WTC11 (cell line): ENCODE measurements at regions of chr17 and their contacts with region 1.

Region 1: DNA sequence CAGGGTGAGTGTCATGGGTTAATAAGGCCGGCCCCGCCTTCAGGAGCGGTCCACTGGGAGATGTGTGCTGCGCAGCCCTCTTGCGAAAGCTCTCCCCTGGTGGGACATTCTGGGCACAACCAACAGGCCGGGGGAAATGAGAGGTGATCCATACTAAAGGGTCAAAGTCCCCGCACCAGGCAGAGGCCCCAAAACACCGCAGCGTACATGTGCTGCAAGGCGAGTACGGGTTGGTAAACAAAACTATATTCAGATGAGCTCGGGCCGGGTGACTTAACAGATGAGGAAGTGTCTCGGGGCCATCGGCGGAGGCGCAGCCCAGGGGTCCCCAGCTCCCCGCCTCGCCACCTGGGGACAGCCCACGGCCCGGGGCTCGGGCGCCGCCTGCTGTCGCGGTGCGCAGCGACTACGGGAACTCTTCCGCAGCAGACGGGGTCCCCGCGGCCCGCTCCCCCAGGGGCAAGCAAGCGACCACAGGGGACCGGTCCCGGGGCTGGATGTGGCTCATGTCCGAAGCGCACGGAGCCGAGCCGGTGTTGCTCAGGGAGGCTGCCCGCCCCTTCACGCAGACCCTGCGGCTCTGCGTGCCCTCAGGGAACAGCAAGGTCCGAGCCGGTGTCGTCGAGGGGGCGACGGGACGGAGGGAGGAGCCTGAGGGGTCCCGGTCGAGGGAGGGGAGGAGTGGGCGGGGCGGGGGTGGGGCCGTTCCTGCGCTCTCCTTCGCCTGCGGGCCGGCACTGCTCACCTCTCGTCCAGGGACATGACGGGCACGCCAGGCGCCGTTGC is at the start of gene RAB37:
- DNase-seq: peak; percentile 70
- ATAC-seq: peak; percentile 58
- H3K4me3 Mint-ChIP-seq: peak within 1 kb of the TSS; percentile 81
- H3K27ac Mint-ChIP-seq: peak within 1 kb of the TSS; percentile 22; the same call in 1 of the 2 replicates
- H3K4me1 Mint-ChIP-seq: peaks cover 27% of the 10 kb centered on the region
- H3K27me3 Mint-ChIP-seq: peaks cover 18% of the 10 kb centered on the region
- CTCF ChIP-seq: no peak
- total RNA-seq, gene RAB37: 8.8 to 9.4 TPM (median 8.9 TPM) in 3 replicates

Region 2: DNA sequence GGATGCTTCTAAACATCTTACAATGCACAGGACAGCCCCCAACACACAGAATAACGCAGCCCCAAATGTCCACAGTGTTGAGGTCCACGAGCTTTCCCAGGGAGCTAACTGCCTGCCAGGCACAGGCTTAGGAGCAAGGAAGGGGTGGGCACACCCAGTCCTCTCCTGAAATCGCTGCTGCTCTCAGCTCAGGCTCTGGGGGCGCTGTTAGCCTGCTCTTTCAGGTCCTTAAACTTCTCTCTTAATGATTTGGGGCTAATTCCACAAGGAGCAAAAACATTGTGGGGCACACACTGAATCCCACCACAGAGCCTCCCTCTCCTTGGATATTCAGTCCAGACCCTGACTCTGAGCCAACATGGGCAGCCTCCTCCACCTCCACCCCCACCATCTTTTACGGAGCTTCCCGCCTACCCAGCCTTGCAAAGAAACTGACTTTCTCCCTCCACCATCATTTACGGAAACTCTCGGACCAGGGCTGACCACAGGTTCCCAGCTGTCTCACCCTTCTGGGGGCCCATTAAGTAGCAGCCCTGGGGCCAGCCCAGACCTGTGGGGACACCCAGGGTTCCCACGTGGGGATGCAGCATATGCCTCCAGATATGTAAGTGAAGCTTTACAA is 170.5 kb before region 1 on chr17:
- CTCF ChIA-PET with region 1: interaction called, 37 read pairs
- POLR2A ChIA-PET with region 1: no interaction called
- DNase-seq: peak; percentile 82
- ATAC-seq: peak; percentile 96
- H3K4me3 Mint-ChIP-seq: no peak overlapping the region
- H3K27ac Mint-ChIP-seq: no peak overlapping the region
- H3K4me1 Mint-ChIP-seq: peaks cover 7% of the 10 kb centered on the region; the same call in 1 of the 2 replicates
- H3K27me3 Mint-ChIP-seq: peaks cover 18% of the 10 kb centered on the region
- CTCF ChIP-seq: peak; percentile 77

Region 3: DNA sequence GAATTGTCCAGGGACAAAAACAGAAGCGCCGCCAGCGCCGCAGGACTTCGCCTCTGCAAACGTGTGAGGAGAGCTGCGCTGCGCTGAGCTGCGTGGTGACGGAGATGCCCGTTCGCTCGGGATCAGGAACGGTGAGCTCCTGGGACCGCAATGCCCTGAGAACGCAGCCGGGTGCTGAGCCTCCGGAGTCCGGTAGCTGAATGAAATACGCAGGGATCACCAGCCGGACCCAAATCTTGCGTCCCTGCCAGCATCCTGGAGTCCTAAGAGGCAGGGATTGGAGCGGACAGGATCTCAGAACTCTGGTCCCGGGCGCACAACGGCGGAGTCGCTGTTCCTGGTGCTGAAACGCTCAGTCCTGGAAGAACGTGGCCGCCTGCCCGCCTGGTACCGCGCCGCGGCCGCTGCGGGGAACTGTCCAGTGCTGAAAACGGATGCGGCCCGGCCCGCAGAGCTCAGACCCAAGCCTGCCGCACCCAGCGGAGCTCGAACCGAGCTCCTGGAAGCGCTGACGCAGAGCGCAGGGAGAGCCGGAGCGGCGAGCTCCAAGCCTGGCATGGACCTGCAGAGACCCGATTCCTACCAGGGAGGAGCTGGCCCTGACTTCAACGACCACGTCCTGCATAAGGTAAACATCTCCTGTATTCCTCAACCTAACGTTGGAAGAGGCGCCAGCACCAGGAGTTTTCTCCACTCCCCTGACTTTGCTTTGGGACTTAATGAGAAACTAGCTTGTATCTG is 65.5 kb before region 1 on chr17:
- CTCF ChIA-PET with region 1: interaction called, 43 read pairs
- POLR2A ChIA-PET with region 1: interaction called, 3 read pairs
- DNase-seq: peak; percentile 97
- ATAC-seq: peak; percentile 95
- H3K4me3 Mint-ChIP-seq: peak overlapping the region; percentile 28
- H3K27ac Mint-ChIP-seq: no peak overlapping the region
- H3K4me1 Mint-ChIP-seq: peaks cover 5% of the 10 kb centered on the region
- H3K27me3 Mint-ChIP-seq: peaks cover 76% of the 10 kb centered on the region
- CTCF ChIP-seq: no peak

Region 4: GRCh38 chr17:74690409-74690825 is 46.3 kb before region 1 on chr17:
- CTCF ChIA-PET with region 1: interaction called, 17 read pairs
- POLR2A ChIA-PET with region 1: no interaction called
- DNase-seq: no peak
- ATAC-seq: no peak
- H3K4me3 Mint-ChIP-seq: no peak overlapping the region
- H3K27ac Mint-ChIP-seq: no peak overlapping the region
- H3K4me1 Mint-ChIP-seq: no peaks in the 10 kb centered on the region
- H3K27me3 Mint-ChIP-seq: peaks cover 22% of the 10 kb centered on the region
- CTCF ChIP-seq: no peak

Region 5: DNA sequence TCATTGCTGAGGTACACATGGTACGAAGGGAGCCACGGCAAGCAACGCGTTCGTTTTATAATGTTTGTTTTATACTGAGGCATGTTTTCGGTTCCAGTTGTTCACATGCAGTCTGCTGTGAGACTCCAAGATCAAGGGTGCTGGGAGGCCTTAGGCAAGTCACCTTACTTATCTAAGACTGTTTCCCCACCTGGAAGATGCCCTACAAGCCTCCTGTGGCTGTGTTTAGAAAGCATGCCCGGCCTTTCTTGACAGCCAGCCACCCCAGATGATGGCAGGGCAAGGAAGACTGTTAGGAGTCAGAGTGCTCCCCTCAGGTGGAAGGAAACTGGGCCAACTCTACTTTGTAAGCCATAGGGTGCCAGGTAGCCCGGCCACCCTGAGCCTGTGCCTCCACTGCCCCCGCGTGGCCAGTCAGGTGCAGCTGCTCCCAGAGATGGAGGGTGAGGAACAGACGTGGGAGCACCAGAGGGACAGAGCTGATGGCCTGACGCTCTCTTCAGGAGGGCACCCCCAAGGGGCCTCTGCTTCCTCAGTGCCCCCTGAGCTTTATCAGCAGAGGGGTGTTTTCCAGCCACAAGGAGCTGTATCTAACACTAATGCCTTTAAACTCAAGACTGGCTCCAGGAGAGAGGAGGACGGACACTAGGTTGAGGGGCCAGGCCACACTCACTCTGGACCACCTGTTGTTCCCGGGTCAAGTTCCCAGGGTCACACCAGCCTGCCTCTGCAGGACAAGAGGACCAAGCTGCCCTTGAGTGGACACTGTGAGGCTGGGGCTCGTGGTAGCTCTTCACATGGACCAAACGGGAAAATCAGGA is 34.0 kb after region 1 on chr17:
- CTCF ChIA-PET with region 1: interaction called, 55 read pairs
- POLR2A ChIA-PET with region 1: interaction called, 7 read pairs
- DNase-seq: peak; percentile 78
- ATAC-seq: peak; percentile 91
- H3K4me3 Mint-ChIP-seq: no peak overlapping the region
- H3K27ac Mint-ChIP-seq: no peak overlapping the region; the same call in none of the 2 replicates
- H3K4me1 Mint-ChIP-seq: peaks cover 9% of the 10 kb centered on the region
- H3K27me3 Mint-ChIP-seq: no peaks in the 10 kb centered on the region
- CTCF ChIP-seq: peak; percentile 46; the same call in 1 of the 2 replicates

Region 6: GRCh38 chr17:74798239-74798707 is 61.6 kb after region 1 on chr17:
- CTCF ChIA-PET with region 1: no interaction called
- POLR2A ChIA-PET with region 1: no interaction called
- DNase-seq: no peak
- ATAC-seq: no peak
- H3K4me3 Mint-ChIP-seq: no peak overlapping the region
- H3K27ac Mint-ChIP-seq: no peak overlapping the region
- H3K4me1 Mint-ChIP-seq: no peaks in the 10 kb centered on the region
- H3K27me3 Mint-ChIP-seq: no peaks in the 10 kb centered on the region
- CTCF ChIP-seq: no peak

Region 7: GRCh38 chr17:74842599-74843351 is 106.1 kb after region 1 on chr17:
- CTCF ChIA-PET with region 1: interaction called, 21 read pairs
- POLR2A ChIA-PET with region 1: no interaction called
- DNase-seq: peak; percentile 75
- ATAC-seq: peak; percentile 81
- H3K4me3 Mint-ChIP-seq: peak overlapping the region; percentile 22; the same call in 1 of the 2 replicates
- H3K27ac Mint-ChIP-seq: no peak overlapping the region
- H3K4me1 Mint-ChIP-seq: peaks cover 21% of the 10 kb centered on the region
- H3K27me3 Mint-ChIP-seq: peaks cover 52% of the 10 kb centered on the region
- CTCF ChIP-seq: no peak

Region 8: GRCh38 chr17:74883041-74883745 is 146.5 kb after region 1 on chr17:
- CTCF ChIA-PET with region 1: no interaction called
- POLR2A ChIA-PET with region 1: no interaction called
- DNase-seq: no peak
- ATAC-seq: peak; percentile 38; the same call in 1 of the 2 replicates
- H3K4me3 Mint-ChIP-seq: no peak overlapping the region
- H3K27ac Mint-ChIP-seq: no peak overlapping the region; the same call in 1 of the 2 replicates
- H3K4me1 Mint-ChIP-seq: peaks cover 8% of the 10 kb centered on the region
- H3K27me3 Mint-ChIP-seq: peaks cover 11% of the 10 kb centered on the region
- CTCF ChIP-seq: no peak